ENCODE measurements at regions of chr5 and their contacts with region 1.

Region 1: GRCh38 chr5:180618819-180619562 is 27.7 kb upstream of the SCGB3A1 start:
- DNase-seq: no peak
- H3K4me3 ChIP-seq: peak overlapping the region; percentile 49
- CTCF ChIP-seq: peak; percentile 69

Region 2: GRCh38 chr5:180605554-180606214 is 13.3 kb before region 1 on chr5:
- CTCF ChIA-PET with region 1: interaction called, 10 read pairs
- POLR2A ChIA-PET with region 1: no interaction called
- DNase-seq: no peak
- H3K4me3 ChIP-seq: no peak overlapping the region
- CTCF ChIP-seq: peak; percentile 70

Region 3: GRCh38 chr5:180975338-180975737 is 356.3 kb after region 1 on chr5:
- CTCF ChIA-PET with region 1: no interaction called
- POLR2A ChIA-PET with region 1: no interaction called
- DNase-seq: no peak
- H3K4me3 ChIP-seq: no peak overlapping the region
- CTCF ChIP-seq: no peak